Prostate gland (tissue), 2 donors: ENCODE measurements at regions of chr5 and their contacts with region 1.

Region 1: DNA sequence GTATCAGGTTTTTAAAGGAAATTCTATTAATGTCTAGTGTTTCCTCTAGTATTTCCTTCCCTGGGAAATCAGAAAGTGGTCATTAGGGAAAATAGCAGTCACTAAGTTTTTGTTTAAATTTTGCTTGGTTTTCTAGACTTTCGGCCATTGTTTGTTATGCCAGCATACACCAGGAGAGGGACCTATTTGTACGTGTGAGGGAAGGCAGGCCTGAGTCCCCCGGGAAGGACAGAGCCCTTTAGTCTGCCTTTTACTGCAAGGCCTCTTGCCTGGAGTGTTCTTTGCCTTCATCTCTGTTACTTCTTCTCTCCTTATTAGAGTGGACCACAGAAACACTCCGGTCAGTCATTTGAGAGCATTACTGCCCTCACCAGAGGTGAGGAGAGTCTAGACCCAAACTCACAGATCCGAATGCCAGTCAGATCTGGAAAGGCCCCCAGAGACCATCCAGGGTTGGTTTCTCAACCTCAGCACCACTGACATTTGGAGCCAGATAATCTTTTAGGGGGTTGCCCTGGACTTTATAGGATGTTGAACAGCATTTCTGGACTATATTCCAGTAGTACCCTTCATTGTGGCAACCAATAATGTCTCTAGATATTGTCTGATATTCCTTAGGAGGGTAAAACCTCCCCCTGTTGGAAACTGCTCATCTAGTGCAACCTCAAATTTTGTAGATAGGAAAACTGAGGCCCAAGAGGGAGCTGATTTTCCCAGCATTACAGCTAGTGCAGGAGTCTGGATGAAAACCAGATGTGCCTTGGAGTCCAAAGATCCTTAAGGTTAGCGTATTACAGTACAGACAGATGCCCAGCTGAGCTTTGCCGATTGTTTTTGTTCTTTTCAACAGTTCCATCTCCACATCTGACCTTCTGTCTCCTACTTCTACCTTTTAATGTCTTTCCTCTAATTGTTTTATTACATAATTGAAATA is 93.0 kb upstream of the NIPAL4 start:
- DNase-seq: no peak
- H3K4me3 ChIP-seq: no peak overlapping the region
- H3K27ac ChIP-seq: peak overlapping the region; percentile 23 to 43
- H3K4me1 ChIP-seq: no peaks in the 10 kb centered on the region
- H3K27me3 ChIP-seq: no peaks in the 10 kb centered on the region
- CTCF ChIP-seq: peak in 2 of 4 experiments; percentile 42 to 47
- POLR2A ChIP-seq: no peak

Region 2: GRCh38 chr5:157476702-157477408 is 109.8 kb after region 1 on chr5:
- intact Hi-C with region 1: loop called (anchors 2 kb)
- DNase-seq: peak; percentile 53
- H3K4me3 ChIP-seq: no peak overlapping the region
- H3K27ac ChIP-seq: no peak overlapping the region
- H3K4me1 ChIP-seq: no peaks in the 10 kb centered on the region
- H3K27me3 ChIP-seq: no peaks in the 10 kb centered on the region
- CTCF ChIP-seq: peak; percentile 35 to 73 (median 70)
- POLR2A ChIP-seq: no peak

Region 3: DNA sequence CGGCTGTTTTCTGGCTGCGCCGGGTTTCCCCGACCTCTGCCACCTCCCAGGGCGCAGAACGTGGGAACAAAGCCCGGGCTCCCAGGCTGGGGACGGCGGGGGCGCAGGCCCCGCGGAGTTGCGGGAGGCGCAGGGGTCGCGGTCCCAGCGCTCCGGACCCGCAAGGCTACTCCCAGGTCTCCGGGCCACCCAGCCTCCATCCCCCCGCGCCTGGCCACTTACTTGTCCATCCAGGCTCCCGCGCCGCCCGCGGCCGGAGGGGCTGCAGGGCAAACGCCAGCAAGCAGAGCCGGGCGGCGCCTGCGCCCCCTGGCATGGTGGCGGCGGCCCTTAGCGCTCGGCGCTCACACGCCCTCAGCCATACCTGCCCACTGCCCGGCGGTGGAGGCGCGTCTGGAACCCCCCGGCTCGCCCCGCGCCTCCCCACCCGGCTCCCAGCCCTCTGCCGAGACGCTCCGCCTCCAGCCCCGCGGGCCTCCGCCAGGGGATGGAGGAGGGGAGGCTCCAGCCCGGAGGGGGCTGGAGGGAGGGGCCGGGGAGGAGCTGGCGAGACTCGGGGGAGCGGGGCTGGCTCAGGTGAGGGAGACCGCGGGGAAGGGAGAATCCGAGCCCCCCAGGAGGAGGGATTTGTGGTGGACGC is 208.5 kb after region 1 on chr5 and contains the start of gene ADAM19:
- intact Hi-C with region 1: loop called (anchors 10 kb)
- DNase-seq: no peak
- H3K4me3 ChIP-seq: peak within 1 kb of the TSS; percentile 48 to 59
- H3K27ac ChIP-seq: peak within 1 kb of the TSS; percentile 76 to 78
- H3K4me1 ChIP-seq: no peaks in the 10 kb centered on the region
- H3K27me3 ChIP-seq: no peaks in the 10 kb centered on the region
- CTCF ChIP-seq: no peak
- POLR2A ChIP-seq: peak; percentile 35
- total RNA-seq, gene ADAM19: 1.9 to 8.1 TPM

Region 4: GRCh38 chr5:157718519-157718918 is 351.5 kb after region 1 on chr5:
- intact Hi-C with region 1: loop called (anchors 2 kb)
- DNase-seq: no peak
- H3K4me3 ChIP-seq: no peak overlapping the region
- H3K27ac ChIP-seq: no peak overlapping the region
- H3K4me1 ChIP-seq: no peaks in the 10 kb centered on the region
- H3K27me3 ChIP-seq: no peaks in the 10 kb centered on the region
- CTCF ChIP-seq: peak in 3 of 4 experiments; percentile 35 to 61 (median 60)
- POLR2A ChIP-seq: no peak

Region 5: GRCh38 chr5:157743163-157744050 is 376.4 kb after region 1 on chr5 and contains the start of gene LSM11:
- intact Hi-C with region 1: loop called (anchors 5 kb)
- DNase-seq: peak; percentile 79
- H3K4me3 ChIP-seq: peak within 1 kb of the TSS; percentile 61 to 78
- H3K27ac ChIP-seq: peak within 1 kb of the TSS; percentile 72
- H3K4me1 ChIP-seq: peaks cover 5% of the 10 kb centered on the region
- H3K27me3 ChIP-seq: no peaks in the 10 kb centered on the region
- CTCF ChIP-seq: peak; percentile 95 to 100 (median 99)
- POLR2A ChIP-seq: peak; percentile 32
- total RNA-seq, gene LSM11: 4.1 to 8.1 TPM